BJ (cell line): ENCODE measurements at regions of chr20 and their contacts with region 1.

Region 1: GRCh38 chr20:44187051-44187762 is at the start of gene JPH2:
- DNase-seq: peak; percentile 63
- H3K4me3 ChIP-seq: peak within 1 kb of the TSS; percentile 44
- H3K27me3 ChIP-seq: no peaks in the 10 kb centered on the region; the same call in 1 of the 2 replicates
- CTCF ChIP-seq: no peak
- polyA plus RNA-seq, gene JPH2: 9.5 and 14.7 TPM in 2 replicates

Region 2: DNA sequence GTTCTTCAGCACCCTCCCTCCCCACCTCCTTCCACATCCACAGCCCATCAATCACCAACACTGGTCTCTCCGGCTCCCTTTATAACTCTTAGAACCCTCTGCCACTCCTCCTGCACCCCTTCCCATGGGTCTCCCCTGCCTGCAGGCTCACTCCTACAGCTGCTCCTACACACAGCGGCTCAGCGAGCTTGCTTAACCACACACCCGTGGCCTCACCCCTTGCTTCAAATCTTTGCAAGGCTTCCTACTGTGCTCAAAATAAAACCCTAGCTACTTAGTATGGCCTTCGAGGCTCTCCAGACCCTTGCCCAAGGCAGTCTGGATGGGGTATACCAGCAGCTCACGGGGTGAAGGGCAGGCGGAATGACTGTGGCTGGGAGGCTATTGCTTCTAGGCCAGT is 64.0 kb before region 1 on chr20:
- CTCF ChIA-PET with region 1: interaction called, 307 read pairs
- POLR2A ChIA-PET with region 1: no interaction called
- DNase-seq: no peak
- H3K4me3 ChIP-seq: no peak overlapping the region
- H3K27me3 ChIP-seq: no peaks in the 10 kb centered on the region
- CTCF ChIP-seq: no peak

Region 3: GRCh38 chr20:44142413-44142812 is 44.8 kb before region 1 on chr20:
- CTCF ChIA-PET with region 1: interaction called, 10 read pairs
- POLR2A ChIA-PET with region 1: no interaction called
- DNase-seq: peak; percentile 17
- H3K4me3 ChIP-seq: no peak overlapping the region
- H3K27me3 ChIP-seq: no peaks in the 10 kb centered on the region
- CTCF ChIP-seq: no peak

Region 4: GRCh38 chr20:44166477-44166876 is 20.7 kb before region 1 on chr20:
- CTCF ChIA-PET with region 1: interaction called, 12 read pairs
- POLR2A ChIA-PET with region 1: no interaction called
- DNase-seq: peak; percentile 30
- H3K4me3 ChIP-seq: no peak overlapping the region
- H3K27me3 ChIP-seq: no peaks in the 10 kb centered on the region
- CTCF ChIP-seq: no peak

Region 5: DNA sequence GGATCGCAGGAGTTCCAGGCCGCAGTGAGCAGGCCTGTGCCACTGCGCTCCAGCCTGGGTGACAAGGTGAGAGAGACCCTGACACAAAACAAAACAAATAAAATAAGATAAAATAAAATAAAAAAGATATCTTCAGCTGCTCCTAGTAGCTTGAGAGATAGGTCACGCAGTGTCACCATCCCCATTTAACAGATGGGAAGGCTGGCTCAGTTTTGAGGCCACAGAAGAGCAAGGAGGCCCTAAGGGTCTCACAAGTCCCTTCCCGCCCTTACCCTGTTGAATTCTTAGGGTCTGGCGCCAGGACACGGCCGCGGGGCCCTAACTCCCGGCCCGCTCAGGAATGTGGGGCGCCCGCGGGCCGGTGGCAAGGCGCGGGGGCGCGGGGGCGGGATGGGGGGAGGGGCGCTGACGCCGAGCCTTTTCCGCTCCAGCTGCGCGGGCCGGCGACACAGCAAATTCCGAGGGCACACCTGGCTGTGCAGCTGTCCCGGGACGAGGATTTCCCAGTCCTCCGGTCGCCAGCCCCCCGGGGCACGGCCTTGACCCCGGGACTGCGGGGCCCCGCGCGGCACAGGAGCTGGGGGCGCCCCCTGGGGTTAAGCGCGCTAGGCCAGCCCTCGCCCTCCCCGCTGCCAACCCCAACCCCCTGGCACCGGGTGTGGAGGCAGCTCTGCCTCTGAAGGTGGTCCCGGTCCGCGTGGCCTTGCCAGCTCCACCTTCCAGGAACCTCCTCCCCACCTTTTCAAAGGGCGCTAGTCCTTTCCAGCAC is 139.4 kb after region 1 on chr20:
- CTCF ChIA-PET with region 1: no interaction called
- POLR2A ChIA-PET with region 1: no interaction called
- DNase-seq: no peak
- H3K4me3 ChIP-seq: peak overlapping the region; percentile 20
- H3K27me3 ChIP-seq: peaks cover 2% of the 10 kb centered on the region; the same call in 1 of the 2 replicates
- CTCF ChIP-seq: 0 out of 2 replicates have a peak, but pooled peaks have one; percentile 9